Activated CD4-positive, alpha-beta T cell treated with anti-CD3 and anti-CD28 coated beads, Interleukin-2, amount 10 ng/mL, durations not matched to agents 24 days and 14 days (primary cell): ENCODE measurements at regions of chr12 and their contacts with region 1.

Region 1: GRCh38 chr12:10540776-10541205 is 35.1 kb downstream of the EIF2S3B start:
- DNase-seq: no peak
- H3K4me3 Mint-ChIP-seq: no peak overlapping the region
- H3K27ac Mint-ChIP-seq: no peak overlapping the region
- H3K4me1 Mint-ChIP-seq: peaks cover 7% of the 10 kb centered on the region
- H3K27me3 Mint-ChIP-seq: peaks cover 36% of the 10 kb centered on the region

Region 2: GRCh38 chr12:10082117-10082874 is 458.5 kb before region 1 on chr12:
- intact Hi-C with region 1: no loop called
- DNase-seq: no peak
- H3K4me3 Mint-ChIP-seq: no peak overlapping the region
- H3K27ac Mint-ChIP-seq: no peak overlapping the region
- H3K4me1 Mint-ChIP-seq: no peaks in the 10 kb centered on the region
- H3K27me3 Mint-ChIP-seq: peaks cover 16% of the 10 kb centered on the region

Region 3: GRCh38 chr12:10320643-10321042 is 220.1 kb before region 1 on chr12:
- intact Hi-C with region 1: loop called (anchors 1 kb)
- DNase-seq: no peak
- H3K4me3 Mint-ChIP-seq: peak overlapping the region; percentile 0
- H3K27ac Mint-ChIP-seq: peak overlapping the region; percentile 77
- H3K4me1 Mint-ChIP-seq: peaks cover 15% of the 10 kb centered on the region
- H3K27me3 Mint-ChIP-seq: peaks cover 7% of the 10 kb centered on the region

Region 4: DNA sequence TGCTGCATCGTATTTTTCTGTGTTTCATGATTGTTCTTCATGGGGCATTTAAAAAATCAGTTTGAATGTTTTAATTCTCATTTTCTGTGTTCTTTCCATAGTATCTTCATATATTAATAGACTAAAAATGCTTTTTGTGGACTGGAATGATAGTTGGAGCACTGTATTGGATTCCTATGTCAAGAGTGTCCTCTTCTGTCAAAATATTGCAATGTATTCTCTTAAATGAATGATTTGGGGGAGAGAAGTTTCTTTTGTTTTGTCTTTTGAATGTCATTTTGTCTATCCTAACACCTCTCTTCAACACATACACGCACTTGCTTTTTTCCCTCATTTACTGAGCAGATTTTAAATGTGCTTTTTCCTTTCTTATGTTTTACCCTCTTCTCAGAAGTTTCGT is 39.8 kb before region 1 on chr12:
- intact Hi-C with region 1: loop called (anchors 2 kb)
- DNase-seq: no peak
- H3K4me3 Mint-ChIP-seq: no peak overlapping the region
- H3K27ac Mint-ChIP-seq: no peak overlapping the region
- H3K4me1 Mint-ChIP-seq: peaks cover 3% of the 10 kb centered on the region
- H3K27me3 Mint-ChIP-seq: peaks cover 19% of the 10 kb centered on the region